HEK293 (cell line): ENCODE measurements at regions of chr2 and their contacts with region 1.

Region 1: DNA sequence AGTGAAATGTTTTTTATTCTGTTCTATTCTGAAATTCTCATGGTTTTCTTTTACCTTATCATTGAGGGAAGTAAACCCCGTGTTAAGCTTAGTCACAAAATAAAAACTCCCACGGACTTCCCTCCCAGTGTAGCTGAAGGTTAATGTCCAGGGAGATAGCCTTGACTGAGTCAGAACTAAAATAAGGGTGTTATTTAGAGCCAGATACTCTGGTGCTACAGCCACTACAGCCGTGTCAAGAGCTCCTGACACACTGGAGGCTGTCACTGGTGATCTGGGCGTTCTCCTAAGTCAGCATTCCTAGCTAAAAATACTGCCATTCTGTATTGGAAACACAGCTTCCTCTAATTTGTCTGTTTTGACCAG is 82.0 kb upstream of the RANBP2 start:
- H3K4me3 ChIP-seq: no peak overlapping the region
- H3K27ac ChIP-seq: no peak overlapping the region
- H3K4me1 ChIP-seq: peaks cover 10% of the 10 kb centered on the region; the same call in 1 of the 2 replicates
- CTCF ChIP-seq: no peak

Region 2: DNA sequence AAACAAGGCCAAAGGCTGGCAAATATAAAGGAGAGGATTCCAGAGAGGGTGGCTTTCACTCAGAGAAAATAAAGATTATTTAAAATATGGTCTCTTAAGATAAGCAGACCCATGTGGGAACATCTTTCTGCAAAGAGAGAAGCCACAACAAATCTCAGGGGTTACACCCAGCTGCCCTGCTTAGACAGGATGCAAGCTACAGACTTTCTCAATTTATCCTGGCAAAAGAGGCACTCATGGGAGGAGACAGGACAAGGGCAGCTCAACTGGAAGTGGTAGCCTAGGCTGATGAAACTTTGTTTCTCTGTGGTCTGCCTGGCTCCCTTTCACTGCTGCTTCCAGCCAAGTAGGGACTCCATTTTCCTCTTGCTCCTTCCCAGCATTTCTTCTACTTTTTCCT is 285.4 kb before region 1 on chr2:
- CTCF ChIA-PET with region 1: interaction called, 19 read pairs
- POLR2A ChIA-PET with region 1: no interaction called
- H3K4me3 ChIP-seq: no peak overlapping the region
- H3K27ac ChIP-seq: no peak overlapping the region
- H3K4me1 ChIP-seq: no peaks in the 10 kb centered on the region
- CTCF ChIP-seq: no peak

Region 3: DNA sequence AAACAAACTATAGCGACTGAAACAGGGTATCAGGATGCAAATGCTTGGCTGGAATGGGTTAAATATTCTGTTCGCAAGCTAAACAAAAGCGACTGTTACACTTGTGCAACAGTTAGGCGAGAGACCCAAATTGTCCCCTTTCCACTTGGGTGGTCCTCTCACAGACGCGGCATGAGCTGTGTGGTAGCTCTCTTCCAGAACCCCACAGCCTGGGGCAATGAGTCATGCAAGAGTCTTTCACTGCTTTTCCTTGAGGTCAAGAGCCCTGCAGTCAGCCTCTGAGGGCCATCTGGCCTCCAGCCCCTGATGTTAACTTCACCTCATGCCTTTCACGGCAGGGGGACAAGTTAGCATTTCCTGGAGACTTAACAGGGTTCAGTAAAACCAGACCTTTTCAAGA is 233.8 kb before region 1 on chr2:
- CTCF ChIA-PET with region 1: interaction called, 11 read pairs
- POLR2A ChIA-PET with region 1: no interaction called
- H3K4me3 ChIP-seq: no peak overlapping the region
- H3K27ac ChIP-seq: no peak overlapping the region
- H3K4me1 ChIP-seq: no peaks in the 10 kb centered on the region
- CTCF ChIP-seq: no peak

Region 4: GRCh38 chr2:108490506-108491122 is 146.7 kb before region 1 on chr2:
- CTCF ChIA-PET with region 1: no interaction called
- POLR2A ChIA-PET with region 1: no interaction called
- H3K4me3 ChIP-seq: no peak overlapping the region
- H3K27ac ChIP-seq: no peak overlapping the region
- H3K4me1 ChIP-seq: no peaks in the 10 kb centered on the region
- CTCF ChIP-seq: no peak

Region 5: GRCh38 chr2:108583903-108584520 is 53.3 kb before region 1 on chr2:
- CTCF ChIA-PET with region 1: interaction called, 28 read pairs
- POLR2A ChIA-PET with region 1: no interaction called
- H3K4me3 ChIP-seq: no peak overlapping the region
- H3K27ac ChIP-seq: no peak overlapping the region
- H3K4me1 ChIP-seq: peaks cover 10% of the 10 kb centered on the region; the same call in 1 of the 2 replicates
- CTCF ChIP-seq: peak; percentile 81

Region 6: GRCh38 chr2:108594132-108594981 is 42.9 kb before region 1 on chr2:
- CTCF ChIA-PET with region 1: interaction called, 69 read pairs
- POLR2A ChIA-PET with region 1: interaction called, 4 read pairs
- H3K4me3 ChIP-seq: no peak overlapping the region
- H3K27ac ChIP-seq: no peak overlapping the region
- H3K4me1 ChIP-seq: peaks cover 18% of the 10 kb centered on the region
- CTCF ChIP-seq: no peak

Region 7: DNA sequence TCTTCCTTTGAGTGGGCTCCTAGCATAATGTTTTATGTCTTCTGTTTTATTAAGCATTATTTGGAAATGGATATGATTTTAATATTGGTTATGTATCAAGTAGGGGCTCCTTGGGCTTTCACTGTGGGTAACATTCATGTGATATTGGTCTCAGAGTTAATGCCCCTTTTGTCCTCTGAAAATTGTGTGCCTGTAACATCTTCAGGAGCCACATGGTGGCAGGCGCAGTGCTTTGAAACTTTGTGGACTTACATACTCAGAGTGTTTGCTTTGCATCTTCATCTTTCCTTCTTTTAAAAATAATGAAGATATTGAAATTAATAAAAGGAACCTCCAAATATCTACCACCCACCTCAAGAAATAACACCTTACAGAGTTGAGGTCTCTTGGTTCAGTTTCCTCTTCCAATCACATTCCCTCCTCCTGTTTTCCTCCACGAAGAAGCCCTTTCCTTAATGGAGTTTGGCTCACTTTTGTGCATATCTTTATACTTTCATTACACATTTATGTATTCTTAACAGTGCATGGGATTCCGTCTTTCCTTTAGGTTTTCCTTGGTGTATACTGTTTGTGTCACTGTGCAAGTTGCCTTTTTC is 29.5 kb before region 1 on chr2:
- CTCF ChIA-PET with region 1: interaction called, 51 read pairs
- POLR2A ChIA-PET with region 1: no interaction called
- H3K4me3 ChIP-seq: no peak overlapping the region
- H3K27ac ChIP-seq: no peak overlapping the region
- H3K4me1 ChIP-seq: peaks cover 6% of the 10 kb centered on the region; the same call in 1 of the 2 replicates
- CTCF ChIP-seq: peak; percentile 30; the same call in 1 of the 2 replicates

Region 8: GRCh38 chr2:108621087-108621559 is 16.2 kb before region 1 on chr2:
- CTCF ChIA-PET with region 1: interaction called, 98 read pairs
- POLR2A ChIA-PET with region 1: no interaction called
- H3K4me3 ChIP-seq: no peak overlapping the region; the same call in 1 of the 2 replicates
- H3K27ac ChIP-seq: peak overlapping the region; percentile 12; the same call in 1 of the 2 replicates
- H3K4me1 ChIP-seq: peaks cover 32% of the 10 kb centered on the region
- CTCF ChIP-seq: no peak

Region 9: GRCh38 chr2:108813732-108814131 is 176.4 kb after region 1 on chr2:
- CTCF ChIA-PET with region 1: no interaction called
- POLR2A ChIA-PET with region 1: no interaction called
- H3K4me3 ChIP-seq: no peak overlapping the region
- H3K27ac ChIP-seq: no peak overlapping the region
- H3K4me1 ChIP-seq: no peaks in the 10 kb centered on the region
- CTCF ChIP-seq: no peak